Heart left ventricle (tissue), 16 donors: ENCODE measurements at regions of chr22 and their contacts with region 1.

Region 1: GRCh38 chr22:35539910-35540594 is 579 bp upstream of the RASD2 start:
- DNase-seq: peak; percentile 61 to 86 (median 65)
- ATAC-seq: peak in 3 of 4 donors; percentile 65 to 86 (median 72)
- H3K4me3 ChIP-seq: peak overlapping the region; percentile 36 to 70 (median 58)
- H3K27ac ChIP-seq: peak overlapping the region in 11 of 12 donors; percentile 56 to 89 (median 60)
- H3K4me1 ChIP-seq: peaks cover 3 to 42% (median 17%) of the 10 kb centered on the region in 12 donors
- H3K27me3 ChIP-seq: peaks cover 0 to 36% (median 0%) of the 10 kb centered on the region in 9 donors
- CTCF ChIP-seq: no peak
- POLR2A ChIP-seq: no peak

Region 2: DNA sequence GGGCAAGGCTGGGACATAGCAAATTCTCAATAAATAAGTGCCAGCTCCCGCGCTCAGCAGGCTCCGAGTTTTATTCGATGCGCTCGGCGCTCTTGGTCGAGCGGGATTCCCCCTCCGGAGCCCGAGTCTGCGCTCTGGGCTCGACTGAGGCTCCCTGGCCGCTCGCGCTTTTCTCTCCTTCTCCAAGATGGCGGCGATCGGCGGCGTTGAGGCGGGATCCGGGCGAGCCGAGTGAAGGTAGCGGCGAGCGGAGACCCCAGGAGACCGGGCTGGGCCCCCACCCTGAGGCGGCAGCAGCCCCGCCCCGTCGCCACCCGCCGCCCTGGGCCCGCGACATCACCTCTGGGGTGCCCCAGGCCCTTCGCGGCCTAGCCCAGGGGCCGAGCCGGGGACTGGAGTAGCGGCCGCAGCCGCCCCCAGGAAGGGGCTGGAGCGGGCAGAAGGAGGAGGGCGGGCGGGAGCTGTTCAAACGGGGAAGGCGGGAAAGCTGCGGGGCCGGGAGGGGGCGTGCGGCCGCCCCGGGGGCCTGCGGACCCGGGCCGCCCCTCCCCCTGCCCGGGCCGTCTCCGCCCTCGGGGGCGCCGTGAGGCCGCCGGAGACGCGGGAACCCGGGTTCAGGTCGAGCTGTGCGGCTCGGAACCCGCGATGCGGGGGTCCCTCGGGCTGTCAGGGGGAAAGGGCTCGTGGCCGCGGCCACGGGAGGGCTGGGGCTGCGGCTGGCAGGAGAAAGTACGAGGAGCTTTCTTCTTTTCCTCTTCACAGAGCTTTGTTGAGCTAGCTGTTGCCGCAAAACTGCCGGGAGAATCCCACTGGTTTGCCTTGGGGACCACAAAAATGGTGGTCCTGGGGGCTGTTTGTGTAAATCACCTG is 282.5 kb before region 1 on chr22 and contains the start of gene HMGXB4:
- intact Hi-C with region 1: no loop called
- DNase-seq: peak; percentile 87 to 93 (median 92)
- ATAC-seq: peak; percentile 92 to 98 (median 98)
- H3K4me3 ChIP-seq: peak within 1 kb of the TSS; percentile 62 to 96 (median 89)
- H3K27ac ChIP-seq: peak within 1 kb of the TSS; percentile 91 to 98 (median 96)
- H3K4me1 ChIP-seq: peaks cover 0 to 30% (median 12%) of the 10 kb centered on the region in 12 donors
- H3K27me3 ChIP-seq: no peaks in the 10 kb centered on the region
- CTCF ChIP-seq: peak in 6 of 12 donors; percentile 16 to 48 (median 28)
- POLR2A ChIP-seq: peak in 1 of 2 donors; percentile 29
- total RNA-seq, gene HMGXB4: 6.3 to 14.2 (median 9.7) TPM

Region 3: GRCh38 chr22:35467681-35468434 is 72.2 kb before region 1 on chr22:
- intact Hi-C with region 1: loop called in 2 of 10 experiments (anchors 5 to 10 kb)
- DNase-seq: peak; percentile 74 to 93 (median 85)
- ATAC-seq: peak; percentile 94 to 98 (median 98)
- H3K4me3 ChIP-seq: no peak overlapping the region
- H3K27ac ChIP-seq: peak overlapping the region; percentile 64 to 92 (median 78)
- H3K4me1 ChIP-seq: peaks cover 0 to 24% (median 17%) of the 10 kb centered on the region in 12 donors
- H3K27me3 ChIP-seq: no peaks in the 10 kb centered on the region
- CTCF ChIP-seq: no peak
- POLR2A ChIP-seq: peak in 1 of 2 donors; percentile 20

Region 4: GRCh38 chr22:35477911-35478582 is 62.0 kb before region 1 on chr22:
- intact Hi-C with region 1: loop called in 2 of 10 experiments (anchors 5 to 10 kb)
- DNase-seq: peak in 4 of 5 donors; percentile 44 to 70 (median 56)
- ATAC-seq: peak in 3 of 4 donors; percentile 27 to 61 (median 57)
- H3K4me3 ChIP-seq: no peak overlapping the region
- H3K27ac ChIP-seq: peak overlapping the region in 10 of 12 donors; percentile 6 to 81 (median 62)
- H3K4me1 ChIP-seq: peaks cover 0 to 22% (median 7%) of the 10 kb centered on the region in 12 donors
- H3K27me3 ChIP-seq: peaks cover 0 to 12% (median 0%) of the 10 kb centered on the region in 9 donors
- CTCF ChIP-seq: no peak
- POLR2A ChIP-seq: no peak

Region 5: GRCh38 chr22:35489239-35489638 is 50.8 kb before region 1 on chr22:
- intact Hi-C with region 1: loop called in 1 of 10 experiments (anchors 5 kb)
- DNase-seq: no peak
- ATAC-seq: no peak
- H3K4me3 ChIP-seq: no peak overlapping the region
- H3K27ac ChIP-seq: no peak overlapping the region
- H3K4me1 ChIP-seq: no peaks in the 10 kb centered on the region
- H3K27me3 ChIP-seq: peaks cover 0 to 3% (median 0%) of the 10 kb centered on the region in 9 donors
- CTCF ChIP-seq: no peak
- POLR2A ChIP-seq: no peak